ENCODE measurements at regions of chr1 and their contacts with region 1.

Region 1: DNA sequence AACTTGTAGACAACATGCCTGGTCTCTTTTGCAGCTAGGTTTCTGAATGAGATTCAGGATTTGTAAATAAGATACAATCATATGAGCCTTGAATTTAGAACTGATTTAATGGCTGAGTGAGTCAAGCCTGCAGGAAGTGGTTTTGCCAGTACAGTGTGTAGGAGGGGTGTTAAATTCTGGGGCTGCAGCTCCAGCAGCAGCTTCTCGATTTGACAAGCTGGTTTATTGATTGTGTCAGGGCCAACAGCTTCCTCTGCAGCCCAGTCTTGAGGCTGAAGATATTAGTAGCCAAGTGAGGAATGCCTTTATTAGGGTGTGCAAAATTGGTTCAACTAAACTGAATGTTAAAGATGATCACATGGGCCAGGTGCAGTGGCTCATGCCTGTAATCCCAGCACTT is 11.5 kb upstream of the PLA2G5 start:
- DNase-seq: peak; percentile 80
- H3K4me3 Mint-ChIP-seq: no peak overlapping the region
- H3K27ac Mint-ChIP-seq: no peak overlapping the region
- H3K4me1 Mint-ChIP-seq: peaks cover 27% of the 10 kb centered on the region
- H3K27me3 Mint-ChIP-seq: peaks cover 6% of the 10 kb centered on the region

Region 2: DNA sequence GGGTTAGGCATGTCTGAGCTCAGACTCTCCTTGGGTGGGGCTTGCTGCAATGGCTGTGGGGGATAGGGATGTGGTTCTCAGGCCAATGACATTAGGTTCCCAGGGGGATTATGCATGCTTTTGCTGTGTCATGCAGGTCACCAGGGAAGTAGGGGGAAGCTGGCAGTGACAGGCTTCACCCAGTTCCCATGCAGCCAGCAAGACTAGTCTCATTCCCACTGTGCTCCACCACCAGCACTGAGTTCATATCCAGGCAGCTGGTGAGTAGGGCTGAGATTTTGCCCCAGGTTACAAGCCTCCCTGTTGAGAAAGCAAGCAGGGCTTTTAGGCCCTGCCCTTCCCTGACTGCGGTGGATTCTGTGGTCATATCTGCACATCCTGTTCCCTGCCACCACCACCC is 20.7 kb before region 1 on chr1:
- CTCF ChIA-PET with region 1: no interaction called
- intact Hi-C with region 1: no loop called
- DNase-seq: no peak
- H3K4me3 Mint-ChIP-seq: no peak overlapping the region
- H3K27ac Mint-ChIP-seq: no peak overlapping the region
- H3K4me1 Mint-ChIP-seq: peaks cover 10% of the 10 kb centered on the region
- H3K27me3 Mint-ChIP-seq: peaks cover 5% of the 10 kb centered on the region

Region 3: GRCh38 chr1:20100632-20101355 is 42.3 kb after region 1 on chr1:
- CTCF ChIA-PET with region 1: no interaction called
- intact Hi-C with region 1: loop called (anchors 1 kb)
- DNase-seq: peak; percentile 60
- H3K4me3 Mint-ChIP-seq: no peak overlapping the region
- H3K27ac Mint-ChIP-seq: no peak overlapping the region
- H3K4me1 Mint-ChIP-seq: peaks cover 8% of the 10 kb centered on the region
- H3K27me3 Mint-ChIP-seq: peaks cover 3% of the 10 kb centered on the region

Region 4: DNA sequence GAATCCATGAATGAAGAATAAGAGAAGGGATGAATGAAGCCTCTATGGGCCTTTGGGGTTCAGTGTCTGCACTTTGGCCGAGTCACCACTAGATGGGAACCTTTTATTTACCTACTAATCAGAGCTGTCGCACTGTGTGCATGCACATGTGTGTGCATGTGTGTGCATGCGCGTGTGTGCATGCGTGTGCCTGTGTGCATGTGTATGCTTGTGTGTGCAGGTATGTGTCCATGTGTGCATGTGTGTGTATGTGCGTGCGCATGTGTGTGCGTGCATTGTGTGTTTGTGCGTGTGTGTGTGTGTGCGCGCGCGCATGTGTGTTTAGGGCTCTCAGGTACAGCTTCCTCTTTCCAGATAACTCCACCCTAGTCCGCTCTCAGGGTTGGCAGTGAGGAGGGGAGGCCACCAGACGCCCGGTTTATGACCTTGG is 107.0 kb after region 1 on chr1:
- CTCF ChIA-PET with region 1: no interaction called
- intact Hi-C with region 1: no loop called
- DNase-seq: peak; percentile 35
- H3K4me3 Mint-ChIP-seq: no peak overlapping the region
- H3K27ac Mint-ChIP-seq: no peak overlapping the region
- H3K4me1 Mint-ChIP-seq: no peaks in the 10 kb centered on the region
- H3K27me3 Mint-ChIP-seq: no peaks in the 10 kb centered on the region